HepG2 (cell line): ENCODE measurements at regions of chr15 and their contacts with region 1.

Region 1: GRCh38 chr15:93087825-93088199 is 1.2 kb downstream of the RGMA start:
- DNase-seq: peak; percentile 22
- ATAC-seq: peak; percentile 78
- H3K4me3 ChIP-seq: peak overlapping the region in 1 of 3 experiments; percentile 20; a peak in 1 of 6 replicates
- H3K27ac ChIP-seq: no peak overlapping the region
- H3K4me1 ChIP-seq: peaks cover 7% of the 10 kb centered on the region; the same call in 1 of the 2 replicates
- H3K27me3 ChIP-seq: peaks cover 9 to 70% of the 10 kb centered on the region in 2 experiments
- CTCF ChIP-seq: peak; percentile 80
- EP300 ChIP-seq: no peak
- POLR2A ChIP-seq: no peak
- RAD21 ChIP-seq: peak; percentile 66

Region 2: GRCh38 chr15:93331545-93332167 is 243.8 kb after region 1 on chr15:
- CTCF ChIA-PET with region 1: no interaction called
- POLR2A ChIA-PET with region 1: no interaction called
- in situ Hi-C with region 1: loop called (anchors 25 kb)
- intact Hi-C with region 1: no loop called
- DNase-seq: no peak
- ATAC-seq: peak; percentile 65
- H3K4me3 ChIP-seq: no peak overlapping the region
- H3K27ac ChIP-seq: no peak overlapping the region
- H3K4me1 ChIP-seq: peaks cover 14% of the 10 kb centered on the region; the same call in 1 of the 2 replicates
- H3K27me3 ChIP-seq: no peaks in the 10 kb centered on the region; a peak in 2 of 5 replicates
- CTCF ChIP-seq: no peak
- EP300 ChIP-seq: no peak
- POLR2A ChIP-seq: no peak
- RAD21 ChIP-seq: no peak

Region 3: GRCh38 chr15:93703092-93703739 is 615.4 kb after region 1 on chr15:
- CTCF ChIA-PET with region 1: no interaction called
- POLR2A ChIA-PET with region 1: no interaction called
- in situ Hi-C with region 1: no loop called
- intact Hi-C with region 1: no loop called
- DNase-seq: no peak
- ATAC-seq: no peak
- H3K4me3 ChIP-seq: no peak overlapping the region
- H3K27ac ChIP-seq: no peak overlapping the region
- H3K4me1 ChIP-seq: no peaks in the 10 kb centered on the region
- H3K27me3 ChIP-seq: no peaks in the 10 kb centered on the region
- CTCF ChIP-seq: no peak
- EP300 ChIP-seq: no peak
- POLR2A ChIP-seq: no peak
- RAD21 ChIP-seq: no peak

Region 4: DNA sequence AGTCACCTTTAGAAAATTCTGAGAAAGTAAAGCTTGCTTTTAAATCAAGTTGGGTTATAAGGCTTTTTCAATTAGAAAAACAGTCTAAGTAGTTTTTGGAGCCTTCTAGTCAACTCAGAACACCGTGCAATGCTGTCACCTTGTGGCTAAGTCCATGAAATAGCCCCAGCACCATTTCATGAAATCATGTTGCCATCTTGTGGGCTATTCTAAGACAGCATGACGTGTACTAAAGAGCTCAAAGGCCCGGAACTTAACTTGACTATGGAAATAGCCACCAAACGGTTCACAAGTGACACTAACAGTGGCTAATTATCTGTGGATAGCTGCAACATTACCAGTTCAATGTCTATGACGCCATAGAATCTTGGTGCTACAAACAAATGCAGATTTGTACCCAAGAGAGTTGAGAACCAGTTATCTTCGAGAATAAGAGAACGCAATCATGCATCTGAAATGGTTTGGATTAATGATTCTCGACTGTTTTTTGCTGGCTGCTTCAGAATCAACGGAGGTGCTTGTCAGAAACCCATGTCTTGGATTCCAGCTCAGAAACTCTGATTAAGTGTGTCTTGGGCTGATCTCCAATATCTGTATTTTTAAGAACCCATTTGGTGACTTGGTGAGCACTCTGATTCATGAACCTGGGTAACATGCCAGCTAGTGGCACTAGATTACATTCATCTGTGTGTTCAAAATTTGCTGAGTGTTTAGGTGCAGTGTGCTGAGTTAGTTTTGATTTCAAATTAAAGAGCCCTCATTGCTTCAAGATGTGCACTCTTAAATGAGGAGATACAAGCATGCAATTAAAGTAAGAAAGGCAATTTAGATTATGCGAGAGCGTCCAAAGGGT is 1032.3 kb after region 1 on chr15:
- CTCF ChIA-PET with region 1: interaction called, 13 read pairs
- POLR2A ChIA-PET with region 1: no interaction called
- in situ Hi-C with region 1: no loop called
- intact Hi-C with region 1: no loop called
- DNase-seq: peak; percentile 71
- ATAC-seq: peak; percentile 99
- H3K4me3 ChIP-seq: no peak overlapping the region
- H3K27ac ChIP-seq: no peak overlapping the region
- H3K4me1 ChIP-seq: no peaks in the 10 kb centered on the region
- H3K27me3 ChIP-seq: no peaks in the 10 kb centered on the region
- CTCF ChIP-seq: peak; percentile 92
- EP300 ChIP-seq: no peak
- POLR2A ChIP-seq: no peak
- RAD21 ChIP-seq: peak; percentile 76